ENCODE measurements at regions of chr6 and their contacts with region 1.

Region 1: GRCh38 chr6:11207199-11207968 is 25.1 kb downstream of the NEDD9 start:
- DNase-seq: peak; percentile 84 to 98
- H3K4me3 ChIP-seq: no peak overlapping the region; the same call in 1 of the 2 replicates
- H3K27ac ChIP-seq: peak overlapping the region; percentile 92
- H3K4me1 ChIP-seq: peaks cover 36% of the 10 kb centered on the region
- H3K27me3 ChIP-seq: no peaks in the 10 kb centered on the region
- CTCF ChIP-seq: no peak

Region 2: DNA sequence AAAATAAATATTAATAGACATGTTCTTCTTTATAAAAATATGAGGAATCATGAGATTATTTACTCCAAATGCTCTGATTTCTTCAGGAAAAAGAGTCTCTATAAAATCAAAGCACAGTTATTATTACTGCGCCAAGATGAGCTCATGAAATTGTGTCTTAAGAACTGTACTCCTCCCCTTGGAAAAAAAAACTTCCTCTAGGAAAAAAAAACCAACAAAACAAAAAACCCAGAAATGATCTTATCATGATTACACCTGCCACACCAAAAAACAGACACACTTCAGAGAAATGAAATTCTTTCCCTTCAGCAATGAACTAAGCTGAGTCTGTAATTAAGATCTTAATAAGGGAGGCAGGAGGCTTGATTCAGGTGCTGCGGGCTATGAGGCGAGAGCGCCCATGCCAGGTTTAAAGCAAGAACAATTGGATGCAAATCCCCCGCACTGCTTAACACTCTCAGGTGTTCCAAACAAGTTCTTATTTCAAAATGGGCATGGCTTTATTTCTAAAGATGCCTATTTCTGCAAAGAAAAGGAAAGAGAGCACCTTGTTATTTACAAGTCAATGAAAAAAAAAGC is 16.0 kb after region 1 on chr6:
- CTCF ChIA-PET with region 1: no interaction called
- POLR2A ChIA-PET with region 1: no interaction called
- intact Hi-C with region 1: no loop called
- DNase-seq: no peak
- H3K4me3 ChIP-seq: no peak overlapping the region
- H3K27ac ChIP-seq: 0 out of 2 replicates have a peak overlapping the region, but pooled peaks have one; percentile 9
- H3K4me1 ChIP-seq: peaks cover 8% of the 10 kb centered on the region
- H3K27me3 ChIP-seq: no peaks in the 10 kb centered on the region
- CTCF ChIP-seq: no peak

Region 3: GRCh38 chr6:11414176-11414963 is 207.0 kb after region 1 on chr6:
- CTCF ChIA-PET with region 1: no interaction called
- POLR2A ChIA-PET with region 1: interaction called, 9 read pairs
- intact Hi-C with region 1: loop called (anchors 5 kb)
- DNase-seq: peak; percentile 69 to 94
- H3K4me3 ChIP-seq: peak overlapping the region; percentile 19; the same call in 1 of the 2 replicates
- H3K27ac ChIP-seq: peak overlapping the region; percentile 95
- H3K4me1 ChIP-seq: peaks cover 46% of the 10 kb centered on the region
- H3K27me3 ChIP-seq: no peaks in the 10 kb centered on the region
- CTCF ChIP-seq: no peak

Measured in PC-9 (cell line).